Activated CD4-positive, alpha-beta memory T cell treated with anti-CD3 and anti-CD28 coated beads for 36 hours (primary cell): ENCODE measurements at regions of chr10 and their contacts with region 1.

Region 1: DNA sequence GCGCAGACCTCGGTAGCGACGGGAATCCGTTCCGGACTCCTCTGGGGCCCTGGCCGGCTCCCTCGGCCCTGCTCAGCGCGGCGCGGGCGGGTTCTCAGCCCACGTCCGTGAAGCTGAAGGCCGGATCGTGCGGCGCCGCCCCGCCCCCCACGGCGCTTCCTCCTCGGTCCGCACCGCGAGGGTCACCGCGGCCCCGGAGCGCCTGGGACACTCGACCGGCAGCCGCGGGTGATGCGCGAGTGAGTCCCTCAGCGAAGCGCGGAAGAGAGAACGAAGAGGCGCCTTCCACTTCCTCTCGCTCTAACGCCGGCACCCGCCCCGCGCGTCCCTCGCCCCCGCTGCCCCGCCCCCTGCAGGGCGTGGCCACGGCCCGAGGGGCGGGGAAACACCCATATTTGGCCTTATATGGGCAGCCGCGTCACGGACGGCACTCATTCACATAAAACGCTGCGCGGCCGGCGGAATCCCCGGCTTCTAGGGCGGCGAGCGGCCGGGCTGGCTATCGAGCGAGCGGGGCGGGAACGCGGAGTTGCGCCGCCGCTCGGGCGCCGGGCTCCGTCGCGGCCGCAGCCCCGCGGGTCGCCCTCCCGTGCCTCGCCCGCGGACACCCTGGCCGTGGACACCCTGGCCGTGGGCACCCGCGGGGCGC is at the start of gene DUSP5:
- DNase-seq: peak; percentile 97
- H3K4me3 Mint-ChIP-seq: peak within 1 kb of the TSS; percentile 96
- H3K27ac Mint-ChIP-seq: peak within 1 kb of the TSS; percentile 97
- H3K4me1 Mint-ChIP-seq: peaks cover 48% of the 10 kb centered on the region
- H3K27me3 Mint-ChIP-seq: no peaks in the 10 kb centered on the region
- total RNA-seq, gene DUSP5: 171 to 176 TPM

Region 2: GRCh38 chr10:110304780-110305421 is 192.7 kb before region 1 on chr10 and contains the start of gene SMNDC1:
- CTCF ChIA-PET with region 1: interaction called, 33 read pairs
- POLR2A ChIA-PET with region 1: interaction called, 21 read pairs
- intact Hi-C with region 1: loop called (anchors 1 kb)
- DNase-seq: peak; percentile 99
- H3K4me3 Mint-ChIP-seq: peak within 1 kb of the TSS; percentile 93
- H3K27ac Mint-ChIP-seq: peak within 1 kb of the TSS; percentile 97
- H3K4me1 Mint-ChIP-seq: peaks cover 49% of the 10 kb centered on the region
- H3K27me3 Mint-ChIP-seq: no peaks in the 10 kb centered on the region
- total RNA-seq, gene SMNDC1: 44.1 to 48.3 TPM

Region 3: GRCh38 chr10:110414563-110415309 is 82.8 kb before region 1 on chr10:
- CTCF ChIA-PET with region 1: interaction called, 3 read pairs
- POLR2A ChIA-PET with region 1: interaction called, 56 read pairs
- intact Hi-C with region 1: loop called (anchors 1 kb)
- DNase-seq: peak; percentile 97
- H3K4me3 Mint-ChIP-seq: peak overlapping the region; percentile 37
- H3K27ac Mint-ChIP-seq: peak overlapping the region; percentile 91
- H3K4me1 Mint-ChIP-seq: peaks cover 87% of the 10 kb centered on the region
- H3K27me3 Mint-ChIP-seq: no peaks in the 10 kb centered on the region

Region 4: DNA sequence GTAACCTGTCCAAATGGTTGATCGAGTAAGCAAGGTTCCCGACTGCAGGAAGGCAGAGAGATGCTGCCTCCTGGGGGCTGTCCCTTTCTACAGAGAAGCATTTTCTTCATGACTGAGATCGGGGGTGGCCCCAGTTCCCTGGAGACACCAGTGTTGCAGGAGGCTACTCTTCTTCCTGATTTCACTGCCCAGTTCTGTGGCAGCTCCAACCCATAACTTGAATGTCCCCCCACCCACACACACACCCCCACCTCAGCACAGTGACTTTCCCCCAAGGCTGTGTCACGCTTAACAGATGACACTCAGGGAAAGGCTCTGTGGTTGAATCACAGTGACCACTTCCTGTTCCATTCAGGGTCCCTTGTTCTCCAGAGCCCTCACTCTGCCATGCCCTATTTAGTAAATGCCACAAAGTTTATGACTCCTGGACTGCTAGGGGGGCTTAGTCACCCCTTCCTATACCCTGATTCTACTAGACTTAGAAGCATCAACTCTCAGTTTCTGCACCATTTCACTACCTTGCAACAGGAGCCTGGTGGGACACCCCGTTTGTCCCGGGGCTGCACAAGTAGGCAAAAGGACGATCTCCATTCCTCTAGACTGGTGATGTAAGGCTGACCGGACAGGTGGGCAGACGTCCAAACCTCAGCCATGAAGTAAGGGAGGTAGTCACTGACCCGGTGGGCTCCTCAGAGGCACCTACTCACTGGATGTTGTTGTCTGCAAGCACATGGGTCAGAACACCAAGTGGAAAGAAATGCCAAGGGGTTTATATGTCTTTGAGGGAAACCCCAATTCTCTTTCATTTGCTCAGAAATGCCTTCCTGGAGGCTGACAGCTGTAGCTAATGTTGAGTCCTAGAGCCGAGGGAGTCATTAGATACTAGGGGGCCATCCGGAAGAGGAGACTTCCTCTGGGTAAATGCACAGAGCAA is 38.7 kb after region 1 on chr10:
- CTCF ChIA-PET with region 1: interaction called, 3 read pairs
- POLR2A ChIA-PET with region 1: interaction called, 3 read pairs
- intact Hi-C with region 1: loop called (anchors 1 kb)
- DNase-seq: peak; percentile 91
- H3K4me3 Mint-ChIP-seq: peak overlapping the region; percentile 28
- H3K27ac Mint-ChIP-seq: peak overlapping the region; percentile 79
- H3K4me1 Mint-ChIP-seq: peaks cover 30% of the 10 kb centered on the region
- H3K27me3 Mint-ChIP-seq: no peaks in the 10 kb centered on the region

Region 5: GRCh38 chr10:110864662-110865140 is 367.1 kb after region 1 on chr10:
- CTCF ChIA-PET with region 1: no interaction called
- POLR2A ChIA-PET with region 1: no interaction called
- intact Hi-C with region 1: loop called (anchors 5 kb)
- DNase-seq: peak; percentile 65
- H3K4me3 Mint-ChIP-seq: peak overlapping the region; percentile 72
- H3K27ac Mint-ChIP-seq: peak overlapping the region; percentile 95
- H3K4me1 Mint-ChIP-seq: peaks cover 93% of the 10 kb centered on the region
- H3K27me3 Mint-ChIP-seq: no peaks in the 10 kb centered on the region

Region 6: DNA sequence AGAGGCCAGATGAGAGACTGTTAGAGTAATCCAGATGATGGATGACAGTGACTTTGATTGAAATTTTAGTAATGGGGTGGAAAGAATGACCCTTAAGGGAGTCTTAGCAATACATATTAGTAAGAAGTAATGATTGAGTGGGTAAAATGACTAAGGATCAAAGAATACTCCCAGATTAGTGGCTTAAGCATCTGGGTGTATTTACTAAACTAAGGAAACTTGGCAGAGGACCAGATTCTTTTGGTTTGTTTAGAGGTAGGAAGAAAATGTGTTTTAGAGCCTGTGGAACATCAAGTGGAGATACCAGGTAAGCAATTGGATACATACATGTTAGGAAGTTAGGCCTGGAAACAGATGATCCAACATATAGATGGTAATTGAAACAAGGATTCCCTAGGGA is 520.5 kb after region 1 on chr10:
- CTCF ChIA-PET with region 1: no interaction called
- POLR2A ChIA-PET with region 1: no interaction called
- intact Hi-C with region 1: no loop called
- DNase-seq: no peak
- H3K4me3 Mint-ChIP-seq: no peak overlapping the region
- H3K27ac Mint-ChIP-seq: no peak overlapping the region
- H3K4me1 Mint-ChIP-seq: peaks cover 8% of the 10 kb centered on the region
- H3K27me3 Mint-ChIP-seq: no peaks in the 10 kb centered on the region